Left ventricle myocardium inferior (tissue), 1 donor: ENCODE measurements at regions of chr1 and their contacts with region 1.

Region 1: GRCh38 chr1:65067491-65068201 is 80.4 kb upstream of the AK4 start:
- DNase-seq: peak; percentile 70
- H3K4me3 ChIP-seq: peak overlapping the region; percentile 82
- H3K27ac ChIP-seq: peak overlapping the region; percentile 98
- H3K4me1 ChIP-seq: peaks cover 49% of the 10 kb centered on the region
- H3K27me3 ChIP-seq: no peaks in the 10 kb centered on the region
- CTCF ChIP-seq: no peak

Region 2: DNA sequence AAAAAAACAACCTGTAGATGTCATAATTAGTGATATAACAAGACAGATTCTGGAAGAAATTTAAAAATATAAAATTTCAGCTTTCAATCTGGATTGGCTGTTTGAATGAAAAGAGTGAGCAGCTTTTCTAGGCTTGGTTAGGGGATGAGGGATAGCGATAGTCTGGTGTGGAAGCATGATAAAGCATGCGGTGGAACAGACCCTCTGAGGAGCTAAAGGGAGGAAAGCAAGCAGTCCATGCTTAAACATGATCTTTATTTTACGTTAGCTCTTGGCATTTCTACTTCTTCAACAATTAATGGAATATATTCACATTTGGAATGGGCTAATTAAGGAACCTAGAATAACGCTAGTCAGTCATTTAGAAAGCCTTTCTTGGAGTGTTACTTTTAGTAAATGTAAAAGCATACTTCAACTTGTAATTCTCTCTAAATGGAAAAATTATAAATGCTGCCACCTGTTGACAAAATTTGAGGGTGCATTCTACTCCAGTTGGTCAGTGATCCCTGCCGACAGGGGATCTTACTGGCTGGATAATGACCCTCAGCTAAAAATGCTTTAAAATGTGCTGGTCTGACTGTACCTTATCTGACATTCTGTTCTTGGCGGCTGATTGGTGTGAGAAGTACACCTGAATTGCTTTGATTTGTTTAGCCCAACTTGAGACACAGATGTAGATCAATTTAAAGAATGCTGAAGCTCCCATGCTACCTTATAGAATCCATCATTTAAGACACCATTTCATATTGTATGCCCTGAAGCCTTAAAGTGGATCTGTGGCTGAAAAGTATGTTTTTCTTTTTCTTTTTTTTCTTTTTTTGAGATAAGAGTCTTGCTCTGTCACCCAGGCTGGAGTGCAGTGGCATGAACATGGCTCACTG is 141.6 kb after region 1 on chr1:
- intact Hi-C with region 1: loop called (anchors 10 kb)
- DNase-seq: no peak
- H3K4me3 ChIP-seq: no peak overlapping the region
- H3K27ac ChIP-seq: peak overlapping the region; percentile 33
- H3K4me1 ChIP-seq: peaks cover 25% of the 10 kb centered on the region
- H3K27me3 ChIP-seq: no peaks in the 10 kb centered on the region
- CTCF ChIP-seq: peak; percentile 78